Prostate gland (tissue), 2 donors: ENCODE measurements at regions of chr3 and their contacts with region 1.

Region 1: DNA sequence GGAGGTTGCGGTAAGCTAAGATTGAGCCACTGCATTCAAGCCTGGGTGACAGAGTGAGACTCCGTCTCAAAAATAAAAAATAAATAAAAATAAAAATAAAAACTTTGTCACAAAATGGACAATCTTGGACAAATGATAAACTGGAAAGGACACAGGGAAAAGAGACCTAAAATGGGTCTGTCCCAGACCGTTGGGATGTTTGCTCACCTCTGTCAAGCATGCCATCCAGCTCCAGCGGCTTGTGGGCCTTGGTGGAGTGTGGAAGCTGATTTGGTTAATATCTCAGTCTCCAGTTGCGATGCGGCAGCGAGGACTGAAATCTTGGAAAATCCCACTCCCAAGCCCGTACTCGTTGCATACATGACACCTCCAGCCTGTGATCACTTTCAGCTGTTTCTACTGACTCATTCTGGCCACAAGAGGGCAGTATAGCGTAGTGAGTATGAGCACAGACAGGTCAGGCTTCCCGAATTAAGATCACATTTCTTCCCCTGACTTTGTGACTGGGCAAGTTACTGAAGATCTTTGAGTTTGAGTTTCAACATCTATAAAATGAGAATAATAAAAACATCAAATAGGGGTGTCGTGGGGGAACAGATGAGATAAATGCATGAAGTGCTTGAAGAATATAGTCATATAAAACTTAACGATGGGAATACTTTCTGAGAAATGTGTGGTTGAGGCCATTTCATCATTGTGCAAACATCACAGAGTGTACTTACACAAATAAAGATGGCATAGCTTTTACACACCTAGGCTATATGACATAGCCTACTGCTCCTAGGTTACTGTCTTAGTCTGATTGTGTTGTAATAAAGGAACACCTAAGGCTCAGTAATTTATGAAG is 19.6 kb upstream of the MOBP start:
- DNase-seq: peak; percentile 78
- H3K4me3 ChIP-seq: no peak overlapping the region
- H3K27ac ChIP-seq: no peak overlapping the region
- H3K4me1 ChIP-seq: no peaks in the 10 kb centered on the region
- H3K27me3 ChIP-seq: no peaks in the 10 kb centered on the region
- CTCF ChIP-seq: peak; percentile 69 to 89 (median 76)
- POLR2A ChIP-seq: no peak

Region 2: GRCh38 chr3:39499651-39500240 is 51.9 kb after region 1 on chr3:
- intact Hi-C with region 1: loop called (anchors 5 kb)
- DNase-seq: no peak
- H3K4me3 ChIP-seq: no peak overlapping the region
- H3K27ac ChIP-seq: no peak overlapping the region
- H3K4me1 ChIP-seq: no peaks in the 10 kb centered on the region
- H3K27me3 ChIP-seq: no peaks in the 10 kb centered on the region
- CTCF ChIP-seq: no peak
- POLR2A ChIP-seq: no peak

Region 3: DNA sequence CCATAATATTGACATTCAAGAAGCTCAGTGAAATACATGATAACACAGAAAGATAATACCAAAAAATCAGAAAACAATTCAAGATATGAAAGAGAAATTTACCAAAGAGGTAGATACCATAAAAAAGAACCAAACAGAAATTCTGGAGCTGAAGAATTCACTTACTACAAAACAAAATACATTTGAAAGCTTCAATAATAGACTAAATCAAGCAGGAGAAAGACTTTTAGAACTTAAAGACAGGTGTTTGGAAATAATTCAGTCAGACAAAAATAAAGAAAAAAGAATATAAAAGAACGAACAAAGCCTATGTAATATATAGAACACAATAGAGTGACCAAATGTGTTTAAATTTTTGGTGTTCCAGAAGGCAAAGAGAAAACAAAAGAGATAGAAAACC is 178.3 kb after region 1 on chr3:
- intact Hi-C with region 1: no loop called
- DNase-seq: no peak
- H3K4me3 ChIP-seq: no peak overlapping the region
- H3K27ac ChIP-seq: no peak overlapping the region
- H3K4me1 ChIP-seq: no peaks in the 10 kb centered on the region
- H3K27me3 ChIP-seq: no peaks in the 10 kb centered on the region
- CTCF ChIP-seq: no peak
- POLR2A ChIP-seq: no peak